ENCODE measurements at regions of chr7 and their contacts with region 1.

Region 1: DNA sequence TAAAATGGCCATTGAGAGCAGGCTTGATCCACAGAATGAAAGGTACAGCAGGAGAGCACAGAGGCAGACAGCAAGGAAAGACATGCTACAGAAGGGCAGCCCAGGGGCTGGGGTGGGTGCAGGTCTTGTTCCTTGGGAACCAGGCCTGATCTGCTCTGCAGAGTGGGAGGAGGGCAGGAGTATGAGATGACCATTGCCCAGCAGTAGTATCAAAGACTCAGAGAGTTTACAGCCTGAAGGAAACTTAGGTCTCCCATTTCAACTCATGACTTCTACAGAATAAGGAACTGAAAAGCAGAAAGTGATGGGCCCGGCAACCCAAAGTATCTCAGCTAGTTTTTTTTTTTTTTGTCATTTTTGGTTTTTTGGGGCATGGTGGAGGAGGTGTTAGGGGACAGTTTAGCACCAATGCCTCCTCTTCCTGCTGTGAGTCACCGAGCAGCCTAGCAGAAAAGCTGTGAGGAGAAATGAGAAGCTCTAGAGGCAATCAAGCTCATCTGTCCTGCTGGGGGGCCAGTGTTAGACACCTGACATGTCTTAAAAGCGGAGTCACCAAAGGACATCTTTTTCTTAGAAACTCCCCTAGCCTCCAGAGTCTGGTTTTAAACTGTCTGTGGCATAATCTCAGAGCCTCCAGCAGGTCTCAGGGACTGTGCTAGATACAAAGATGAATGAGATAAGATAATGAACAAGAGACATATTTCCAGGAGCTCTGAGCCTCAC is 34.3 kb upstream of the HERPUD2 start:
- DNase-seq: peak in 4 of 5 donors; percentile 15 to 83 (median 32)
- H3K4me3 ChIP-seq: no peak overlapping the region
- H3K4me3 Mint-ChIP-seq: peak overlapping the region in 7 of 8 donors; percentile 3 to 64 (median 46)
- H3K27ac ChIP-seq: peak overlapping the region; percentile 8
- H3K27ac Mint-ChIP-seq: peak overlapping the region in 6 of 7 donors; percentile 9 to 85 (median 22)
- H3K4me1 ChIP-seq: peaks cover 52% of the 10 kb centered on the region
- H3K4me1 Mint-ChIP-seq: peaks cover 33 to 51% (median 44%) of the 10 kb centered on the region in 4 donors
- H3K27me3 ChIP-seq: no peaks in the 10 kb centered on the region
- H3K27me3 Mint-ChIP-seq: no peaks in the 10 kb centered on the region

Region 2: DNA sequence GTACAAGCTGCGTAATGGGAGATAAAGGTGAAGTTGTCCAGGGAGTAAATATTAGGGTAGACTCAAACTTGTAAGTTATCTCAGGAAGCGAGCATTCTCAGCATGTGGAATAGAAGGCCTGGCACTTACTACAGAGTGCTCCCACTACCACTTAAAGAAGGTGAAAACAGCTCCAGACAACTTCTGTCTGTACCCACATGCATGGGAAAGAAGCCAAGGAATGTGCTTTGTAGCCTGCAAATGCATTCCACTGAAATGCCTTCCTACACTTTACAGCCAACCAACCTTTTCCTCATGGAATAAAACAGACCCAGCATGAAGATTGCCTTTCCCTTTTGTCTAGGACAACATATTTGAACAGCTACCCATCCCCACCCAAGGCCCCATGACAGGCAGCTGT is 1116.6 kb before region 1 on chr7:
- CTCF ChIA-PET with region 1: no interaction called
- POLR2A ChIA-PET with region 1: no interaction called
- intact Hi-C with region 1: no loop called
- DNase-seq: no peak
- H3K4me3 ChIP-seq: no peak overlapping the region
- H3K4me3 Mint-ChIP-seq: no peak overlapping the region
- H3K27ac ChIP-seq: no peak overlapping the region
- H3K27ac Mint-ChIP-seq: no peak overlapping the region
- H3K4me1 ChIP-seq: no peaks in the 10 kb centered on the region
- H3K4me1 Mint-ChIP-seq: no peaks in the 10 kb centered on the region
- H3K27me3 ChIP-seq: no peaks in the 10 kb centered on the region
- H3K27me3 Mint-ChIP-seq: no peaks in the 10 kb centered on the region

Region 3: DNA sequence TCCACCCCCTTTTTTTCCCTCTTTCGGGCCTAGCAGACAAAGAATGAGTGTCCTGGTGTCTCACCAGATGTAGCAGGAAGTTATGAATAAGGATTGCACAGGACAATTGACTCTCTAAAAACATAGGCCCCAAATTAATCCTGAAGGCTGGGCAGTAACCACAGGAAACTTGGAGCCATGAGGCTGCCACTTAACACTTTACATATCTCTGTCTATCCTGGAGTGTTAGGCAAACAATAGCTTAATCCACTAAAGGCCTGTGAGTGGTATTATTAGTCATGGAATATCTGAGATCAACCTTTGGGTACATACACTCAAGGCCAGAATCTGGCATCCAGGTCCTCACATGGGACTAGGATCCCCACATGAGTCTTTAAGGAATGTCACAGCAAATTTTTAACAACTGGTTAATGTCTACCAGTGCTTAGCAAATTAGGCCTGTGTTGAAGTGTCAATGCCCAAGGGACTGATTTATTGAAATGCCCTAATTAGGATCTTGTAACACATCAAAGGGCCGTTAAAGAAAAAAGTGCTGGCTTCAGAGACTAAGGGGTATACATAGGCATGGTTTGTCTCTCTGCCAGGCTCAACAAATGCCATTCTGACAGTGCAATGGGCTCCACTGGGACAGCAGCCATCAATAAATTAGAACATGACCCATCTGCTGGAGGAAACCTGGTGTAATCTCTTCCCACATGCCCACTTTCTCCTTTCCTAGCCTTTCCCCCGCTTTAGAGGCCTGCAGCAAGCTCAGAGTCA is 278.6 kb before region 1 on chr7:
- CTCF ChIA-PET with region 1: no interaction called
- POLR2A ChIA-PET with region 1: no interaction called
- intact Hi-C with region 1: no loop called
- DNase-seq: no peak
- H3K4me3 ChIP-seq: no peak overlapping the region
- H3K4me3 Mint-ChIP-seq: no peak overlapping the region
- H3K27ac ChIP-seq: no peak overlapping the region
- H3K27ac Mint-ChIP-seq: no peak overlapping the region
- H3K4me1 ChIP-seq: no peaks in the 10 kb centered on the region
- H3K4me1 Mint-ChIP-seq: peaks cover 0 to 4% (median 3%) of the 10 kb centered on the region in 4 donors
- H3K27me3 ChIP-seq: peaks cover 8% of the 10 kb centered on the region
- H3K27me3 Mint-ChIP-seq: peaks cover 24 to 29% of the 10 kb centered on the region in 2 donors

Region 4: DNA sequence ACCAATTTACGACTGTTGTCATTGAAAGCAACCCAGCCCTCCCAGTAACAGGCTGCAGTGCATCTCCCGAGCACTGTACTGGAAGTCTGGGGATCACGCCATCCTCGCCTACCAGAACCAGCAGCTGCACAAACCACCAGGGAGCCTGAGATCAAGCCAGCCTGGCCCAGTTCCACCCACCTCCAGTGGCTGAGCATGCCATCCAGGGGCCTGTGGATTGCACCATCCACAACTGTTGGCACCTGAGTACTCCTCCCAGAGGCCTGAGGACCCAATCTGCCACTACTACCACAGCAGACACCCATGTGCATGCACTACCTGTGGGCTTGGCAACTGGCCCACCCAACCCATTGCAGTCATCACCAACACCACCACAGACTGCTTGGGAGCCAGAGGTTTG is 78.5 kb before region 1 on chr7:
- CTCF ChIA-PET with region 1: no interaction called
- POLR2A ChIA-PET with region 1: no interaction called
- intact Hi-C with region 1: no loop called
- DNase-seq: no peak
- H3K4me3 ChIP-seq: no peak overlapping the region
- H3K4me3 Mint-ChIP-seq: no peak overlapping the region
- H3K27ac ChIP-seq: no peak overlapping the region
- H3K27ac Mint-ChIP-seq: peak overlapping the region in 1 of 7 donors; percentile 56
- H3K4me1 ChIP-seq: peaks cover 75% of the 10 kb centered on the region
- H3K4me1 Mint-ChIP-seq: peaks cover 59 to 95% (median 82%) of the 10 kb centered on the region in 4 donors
- H3K27me3 ChIP-seq: no peaks in the 10 kb centered on the region
- H3K27me3 Mint-ChIP-seq: no peaks in the 10 kb centered on the region

Region 5: GRCh38 chr7:35707422-35707821 is 21.8 kb before region 1 on chr7:
- CTCF ChIA-PET with region 1: interaction called, 53 read pairs
- POLR2A ChIA-PET with region 1: interaction called, 18 read pairs
- intact Hi-C with region 1: loop called (anchors 1 kb)
- DNase-seq: no peak
- H3K4me3 ChIP-seq: no peak overlapping the region
- H3K4me3 Mint-ChIP-seq: peak overlapping the region in 1 of 8 donors; percentile 20
- H3K27ac ChIP-seq: no peak overlapping the region
- H3K27ac Mint-ChIP-seq: peak overlapping the region in 2 of 7 donors; percentile 16 to 17
- H3K4me1 ChIP-seq: peaks cover 15% of the 10 kb centered on the region
- H3K4me1 Mint-ChIP-seq: peaks cover 9 to 24% (median 18%) of the 10 kb centered on the region in 4 donors
- H3K27me3 ChIP-seq: no peaks in the 10 kb centered on the region
- H3K27me3 Mint-ChIP-seq: no peaks in the 10 kb centered on the region

Region 6: GRCh38 chr7:35714862-35715261 is 14.4 kb before region 1 on chr7:
- CTCF ChIA-PET with region 1: interaction called, 53 read pairs
- POLR2A ChIA-PET with region 1: interaction called, 18 read pairs
- intact Hi-C with region 1: no loop called
- DNase-seq: no peak
- H3K4me3 ChIP-seq: no peak overlapping the region
- H3K4me3 Mint-ChIP-seq: no peak overlapping the region
- H3K27ac ChIP-seq: no peak overlapping the region
- H3K27ac Mint-ChIP-seq: peak overlapping the region in 1 of 7 donors; percentile 14
- H3K4me1 ChIP-seq: peaks cover 5% of the 10 kb centered on the region
- H3K4me1 Mint-ChIP-seq: peaks cover 0 to 8% (median 6%) of the 10 kb centered on the region in 4 donors
- H3K27me3 ChIP-seq: no peaks in the 10 kb centered on the region
- H3K27me3 Mint-ChIP-seq: no peaks in the 10 kb centered on the region

Measured in CD4-positive, alpha-beta memory T cell (primary cell).